CD4-positive, alpha-beta memory T cell (primary cell): ENCODE measurements at regions of chr1 and their contacts with region 1.

Region 1: GRCh38 chr1:53278201-53278725 is 39.9 kb upstream of the MAGOH start:
- DNase-seq: peak; percentile 59 to 69 (median 62)
- H3K4me3 ChIP-seq: no peak overlapping the region
- H3K4me3 Mint-ChIP-seq: no peak overlapping the region
- H3K27ac ChIP-seq: no peak overlapping the region
- H3K27ac Mint-ChIP-seq: peak overlapping the region in 5 of 7 donors; percentile 9 to 86 (median 76)
- H3K4me1 ChIP-seq: no peaks in the 10 kb centered on the region
- H3K4me1 Mint-ChIP-seq: peaks cover 0 to 5% (median 1%) of the 10 kb centered on the region in 4 donors
- H3K27me3 ChIP-seq: no peaks in the 10 kb centered on the region
- H3K27me3 Mint-ChIP-seq: no peaks in the 10 kb centered on the region

Region 2: GRCh38 chr1:53326088-53326597 is 47.9 kb after region 1 on chr1:
- CTCF ChIA-PET with region 1: interaction called, 16 read pairs
- POLR2A ChIA-PET with region 1: no interaction called
- intact Hi-C with region 1: loop called (anchors 2 kb)
- DNase-seq: peak; percentile 86 to 92 (median 87)
- H3K4me3 ChIP-seq: peak overlapping the region; percentile 78 to 82
- H3K4me3 Mint-ChIP-seq: peak overlapping the region; percentile 88 to 98 (median 93)
- H3K27ac ChIP-seq: peak overlapping the region; percentile 60
- H3K27ac Mint-ChIP-seq: peak overlapping the region; percentile 84 to 94 (median 89)
- H3K4me1 ChIP-seq: peaks cover 12% of the 10 kb centered on the region
- H3K4me1 Mint-ChIP-seq: peaks cover 11 to 30% (median 19%) of the 10 kb centered on the region in 4 donors
- H3K27me3 ChIP-seq: no peaks in the 10 kb centered on the region
- H3K27me3 Mint-ChIP-seq: no peaks in the 10 kb centered on the region

Region 3: GRCh38 chr1:53385276-53386225 is 107.3 kb after region 1 on chr1:
- CTCF ChIA-PET with region 1: interaction called, 240 read pairs
- POLR2A ChIA-PET with region 1: interaction called, 3 read pairs
- intact Hi-C with region 1: no loop called
- DNase-seq: no peak
- H3K4me3 ChIP-seq: no peak overlapping the region
- H3K4me3 Mint-ChIP-seq: no peak overlapping the region
- H3K27ac ChIP-seq: no peak overlapping the region
- H3K27ac Mint-ChIP-seq: no peak overlapping the region
- H3K4me1 ChIP-seq: no peaks in the 10 kb centered on the region
- H3K4me1 Mint-ChIP-seq: no peaks in the 10 kb centered on the region
- H3K27me3 ChIP-seq: no peaks in the 10 kb centered on the region
- H3K27me3 Mint-ChIP-seq: peaks cover 0 to 5% of the 10 kb centered on the region in 2 donors

Region 4: GRCh38 chr1:53413175-53414001 is 135.1 kb after region 1 on chr1:
- CTCF ChIA-PET with region 1: interaction called, 19 read pairs
- POLR2A ChIA-PET with region 1: interaction called, 4 read pairs
- intact Hi-C with region 1: no loop called
- DNase-seq: peak; percentile 63 to 86 (median 69)
- H3K4me3 ChIP-seq: peak overlapping the region in 1 of 2 donors; percentile 3
- H3K4me3 Mint-ChIP-seq: peak overlapping the region; percentile 11 to 78 (median 65)
- H3K27ac ChIP-seq: peak overlapping the region; percentile 63
- H3K27ac Mint-ChIP-seq: peak overlapping the region; percentile 91 to 99 (median 98)
- H3K4me1 ChIP-seq: peaks cover 79% of the 10 kb centered on the region
- H3K4me1 Mint-ChIP-seq: peaks cover 38 to 78% (median 59%) of the 10 kb centered on the region in 4 donors
- H3K27me3 ChIP-seq: no peaks in the 10 kb centered on the region
- H3K27me3 Mint-ChIP-seq: no peaks in the 10 kb centered on the region

Region 5: DNA sequence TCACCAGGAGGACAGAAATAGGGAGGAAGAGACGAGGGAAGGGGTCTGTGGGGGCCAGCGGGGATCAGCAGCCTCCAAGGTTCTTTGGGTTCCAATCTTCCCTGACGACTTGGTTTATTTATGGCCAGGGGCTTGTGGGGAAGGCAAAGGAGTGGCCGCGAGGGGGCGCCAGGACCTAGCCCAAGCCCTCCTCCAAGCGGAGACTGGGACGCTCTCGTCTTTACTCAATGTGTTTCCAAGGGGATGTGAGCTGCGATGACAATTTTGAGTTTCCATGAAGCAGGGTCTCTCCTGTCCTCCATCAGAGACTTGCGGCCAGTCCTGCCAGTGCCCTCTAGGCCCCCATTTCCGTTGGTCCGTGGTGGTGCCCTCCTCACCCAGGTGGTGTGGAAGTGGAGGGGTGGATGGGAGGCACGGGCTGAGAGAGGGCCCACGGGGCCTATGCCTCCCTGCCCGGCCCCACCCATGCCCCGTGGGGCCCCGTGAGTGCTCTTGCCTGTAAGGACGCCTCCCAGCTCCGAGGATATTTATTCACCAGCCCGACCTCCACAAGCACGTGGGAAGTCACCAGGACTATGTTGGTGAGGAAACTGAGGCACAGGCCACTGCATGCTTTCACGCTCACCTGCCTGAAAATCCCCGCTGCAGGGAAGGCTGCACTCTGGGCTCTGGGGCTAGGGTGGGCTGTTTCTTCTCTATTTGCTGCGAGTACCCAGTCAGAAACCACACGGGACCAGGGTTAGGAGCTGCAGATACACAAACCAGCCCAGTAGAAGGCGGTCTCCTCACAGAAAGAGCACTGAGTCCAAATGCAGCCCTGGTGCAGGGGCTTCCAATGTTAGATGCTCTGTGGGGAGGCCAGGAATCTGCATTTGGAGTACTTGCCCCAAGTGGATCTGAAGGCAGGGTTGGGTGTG is 207.5 kb after region 1 on chr1:
- CTCF ChIA-PET with region 1: interaction called, 8 read pairs
- POLR2A ChIA-PET with region 1: no interaction called
- intact Hi-C with region 1: loop called (anchors 5 kb)
- DNase-seq: peak in 4 of 5 donors; percentile 34 to 39 (median 38)
- H3K4me3 ChIP-seq: no peak overlapping the region
- H3K4me3 Mint-ChIP-seq: peak overlapping the region in 1 of 8 donors; percentile 58
- H3K27ac ChIP-seq: no peak overlapping the region
- H3K27ac Mint-ChIP-seq: no peak overlapping the region
- H3K4me1 ChIP-seq: no peaks in the 10 kb centered on the region
- H3K4me1 Mint-ChIP-seq: peaks cover 0 to 10% (median 5%) of the 10 kb centered on the region in 4 donors
- H3K27me3 ChIP-seq: no peaks in the 10 kb centered on the region
- H3K27me3 Mint-ChIP-seq: peaks cover 17 to 18% of the 10 kb centered on the region in 2 donors